ENCODE measurements at regions of chr13 and their contacts with region 1.

Region 1: DNA sequence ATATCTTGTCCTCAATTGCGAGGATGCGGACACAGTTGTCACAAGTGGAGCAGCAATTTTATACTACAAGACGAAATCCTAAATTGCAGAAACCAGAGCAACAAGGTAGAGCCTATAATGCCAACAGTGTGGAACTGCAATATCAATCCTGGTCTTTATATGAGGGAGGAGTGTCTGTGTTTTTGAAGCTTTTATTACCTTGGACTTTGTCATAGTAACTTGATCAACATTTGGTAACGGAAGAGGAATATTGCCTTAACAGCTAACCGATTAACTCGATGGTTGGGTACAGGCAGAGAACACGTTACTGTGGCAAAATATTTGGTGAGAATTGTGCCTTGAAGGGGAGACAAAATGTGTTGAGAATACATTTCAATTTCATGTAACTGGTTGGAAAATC is 661.5 kb downstream of the FGF9 start:
- DNase-seq: no peak
- ATAC-seq: no peak
- H3K4me3 ChIP-seq: no peak overlapping the region
- H3K27ac ChIP-seq: no peak overlapping the region
- H3K4me1 ChIP-seq: no peaks in the 10 kb centered on the region
- H3K27me3 ChIP-seq: no peaks in the 10 kb centered on the region
- CTCF ChIP-seq: no peak
- POLR2A ChIP-seq: no peak

Region 2: GRCh38 chr13:22387899-22388298 is 55.5 kb after region 1 on chr13:
- intact Hi-C with region 1: loop called in 1 of 10 experiments (anchors 2 kb)
- DNase-seq: no peak
- ATAC-seq: peak in 3 of 4 donors; percentile 22 to 83 (median 49)
- H3K4me3 ChIP-seq: no peak overlapping the region
- H3K27ac ChIP-seq: peak overlapping the region in 1 of 12 donors; percentile 16
- H3K4me1 ChIP-seq: peaks cover 0 to 4% (median 0%) of the 10 kb centered on the region in 12 donors
- H3K27me3 ChIP-seq: no peaks in the 10 kb centered on the region
- CTCF ChIP-seq: no peak
- POLR2A ChIP-seq: no peak